ENCODE measurements at regions of chr2 and their contacts with region 1.

Region 1: GRCh38 chr2:218852911-218853667 is 6.5 kb upstream of the WNT6 start:
- DNase-seq: peak; percentile 59 to 74 (median 62)
- ATAC-seq: peak; percentile 65
- H3K4me3 ChIP-seq: no peak overlapping the region
- H3K27ac ChIP-seq: no peak overlapping the region
- H3K4me1 ChIP-seq: peaks cover 8% of the 10 kb centered on the region
- H3K27me3 ChIP-seq: no peaks in the 10 kb centered on the region
- CTCF ChIP-seq: peak; percentile 35 to 81 (median 64)
- POLR2A ChIP-seq: no peak

Region 2: DNA sequence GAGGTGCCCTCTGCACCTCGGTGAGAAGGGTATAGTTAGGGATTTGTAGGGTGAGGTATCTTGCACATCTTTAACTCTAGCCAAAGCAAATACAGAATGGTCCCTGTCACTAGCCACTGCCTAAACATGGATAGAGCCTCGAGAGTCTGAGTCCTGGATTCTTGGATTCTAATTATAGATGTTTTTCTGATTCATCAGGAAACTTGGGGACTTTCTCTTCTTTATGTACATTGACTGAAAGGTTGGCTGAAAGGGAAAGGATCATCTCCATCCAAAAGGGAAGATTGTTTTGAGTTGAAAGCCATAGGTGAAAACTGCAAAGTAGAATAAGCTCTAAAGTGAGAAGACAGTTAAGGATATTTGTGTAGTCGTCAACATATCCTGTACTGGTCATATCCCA is 173.0 kb before region 1 on chr2:
- intact Hi-C with region 1: no loop called
- DNase-seq: no peak
- ATAC-seq: no peak
- H3K4me3 ChIP-seq: no peak overlapping the region
- H3K27ac ChIP-seq: no peak overlapping the region
- H3K4me1 ChIP-seq: no peaks in the 10 kb centered on the region
- H3K27me3 ChIP-seq: no peaks in the 10 kb centered on the region
- CTCF ChIP-seq: no peak
- POLR2A ChIP-seq: no peak

Region 3: DNA sequence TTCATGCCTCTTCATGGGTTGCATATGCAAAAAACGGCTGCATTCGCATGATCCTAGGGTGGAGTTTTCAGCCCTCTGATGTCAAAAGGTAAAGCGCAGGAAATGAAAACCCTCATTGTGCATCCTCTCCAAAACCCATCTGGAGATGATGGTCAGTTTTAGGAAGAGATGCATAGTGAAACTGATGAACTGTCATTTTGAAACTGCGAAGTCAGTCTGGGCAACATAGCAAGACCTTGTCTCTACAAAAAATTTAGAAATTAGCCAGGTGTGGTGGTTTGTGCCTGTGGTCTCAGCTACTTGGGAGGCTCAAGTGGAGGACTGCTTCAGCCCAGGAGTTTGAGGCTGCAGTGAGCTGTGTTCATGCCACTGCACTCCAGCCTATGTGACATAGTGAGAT is 145.0 kb before region 1 on chr2:
- intact Hi-C with region 1: loop called (anchors 10 kb)
- DNase-seq: no peak
- ATAC-seq: no peak
- H3K4me3 ChIP-seq: no peak overlapping the region
- H3K27ac ChIP-seq: no peak overlapping the region
- H3K4me1 ChIP-seq: peaks cover 16% of the 10 kb centered on the region
- H3K27me3 ChIP-seq: no peaks in the 10 kb centered on the region
- CTCF ChIP-seq: no peak
- POLR2A ChIP-seq: no peak

Region 4: DNA sequence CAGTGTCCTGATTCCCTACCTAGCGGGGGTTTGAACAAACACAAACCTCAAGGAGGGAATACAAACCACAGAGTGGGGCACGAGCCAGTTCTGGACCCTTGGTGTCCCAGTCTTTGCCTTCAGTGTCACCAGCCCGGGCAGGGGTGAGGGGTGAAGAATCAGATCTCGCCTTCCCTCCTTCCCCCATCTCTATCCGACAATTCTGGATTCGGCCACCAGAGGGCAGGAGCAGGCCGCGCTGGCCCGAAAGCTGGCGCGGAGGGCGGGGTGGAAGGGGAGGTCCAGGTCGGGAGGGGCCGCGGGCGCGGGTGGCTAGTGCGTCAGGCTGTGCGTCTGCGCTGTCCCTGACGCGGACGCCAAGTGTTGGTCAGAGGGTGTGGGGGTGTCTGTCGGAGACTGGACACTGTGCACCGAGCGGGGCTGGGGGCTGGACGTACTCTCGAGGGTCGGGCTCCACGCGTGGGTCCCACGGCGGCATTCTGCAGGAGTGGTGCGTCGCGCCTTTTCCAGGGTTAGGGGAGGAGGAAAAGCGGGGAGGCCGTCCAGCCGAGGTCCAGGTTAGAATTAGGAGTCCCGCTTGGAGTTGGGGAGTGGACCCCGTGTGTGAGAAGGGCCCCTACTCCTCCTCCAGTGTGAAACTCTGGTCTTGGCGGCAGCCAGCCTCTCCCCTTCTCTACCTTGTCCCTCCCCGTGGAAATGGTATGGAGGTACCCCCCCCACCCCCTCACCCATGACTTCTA is 143.1 kb after region 1 on chr2:
- intact Hi-C with region 1: no loop called
- DNase-seq: peak; percentile 96 to 97 (median 96)
- ATAC-seq: peak; percentile 88
- H3K4me3 ChIP-seq: no peak overlapping the region
- H3K27ac ChIP-seq: peak overlapping the region; percentile 95 to 99 (median 98)
- H3K4me1 ChIP-seq: peaks cover 66% of the 10 kb centered on the region
- H3K27me3 ChIP-seq: peaks cover 0 to 23% of the 10 kb centered on the region in 2 donors
- CTCF ChIP-seq: peak; percentile 84 to 98 (median 96)
- POLR2A ChIP-seq: peak; percentile 76 to 97 (median 89)

Region 5: GRCh38 chr2:219218732-219219701 is 365.9 kb after region 1 on chr2 and contains the start of gene ABCB6:
- intact Hi-C with region 1: no loop called
- DNase-seq: peak; percentile 95 to 97 (median 96)
- ATAC-seq: peak; percentile 88
- H3K4me3 ChIP-seq: peak within 1 kb of the TSS in 1 of 2 donors; percentile 1
- H3K27ac ChIP-seq: peak within 1 kb of the TSS; percentile 68 to 92 (median 90)
- H3K4me1 ChIP-seq: peaks cover 31% of the 10 kb centered on the region
- H3K27me3 ChIP-seq: no peaks in the 10 kb centered on the region
- CTCF ChIP-seq: no peak
- POLR2A ChIP-seq: peak; percentile 35 to 44 (median 44)
- total RNA-seq, gene ABCB6: 10.5 to 11.7 TPM

Measured in body of pancreas (tissue), 4 donors.